Activated CD8-positive, alpha-beta T cell treated with anti-CD3 and anti-CD28 coated beads, Interleukin-2, amount 10 ng/mL, durations not matched to agents 7 days and 5 days (primary cell): ENCODE measurements at regions of chr3 and their contacts with region 1.

Region 1: DNA sequence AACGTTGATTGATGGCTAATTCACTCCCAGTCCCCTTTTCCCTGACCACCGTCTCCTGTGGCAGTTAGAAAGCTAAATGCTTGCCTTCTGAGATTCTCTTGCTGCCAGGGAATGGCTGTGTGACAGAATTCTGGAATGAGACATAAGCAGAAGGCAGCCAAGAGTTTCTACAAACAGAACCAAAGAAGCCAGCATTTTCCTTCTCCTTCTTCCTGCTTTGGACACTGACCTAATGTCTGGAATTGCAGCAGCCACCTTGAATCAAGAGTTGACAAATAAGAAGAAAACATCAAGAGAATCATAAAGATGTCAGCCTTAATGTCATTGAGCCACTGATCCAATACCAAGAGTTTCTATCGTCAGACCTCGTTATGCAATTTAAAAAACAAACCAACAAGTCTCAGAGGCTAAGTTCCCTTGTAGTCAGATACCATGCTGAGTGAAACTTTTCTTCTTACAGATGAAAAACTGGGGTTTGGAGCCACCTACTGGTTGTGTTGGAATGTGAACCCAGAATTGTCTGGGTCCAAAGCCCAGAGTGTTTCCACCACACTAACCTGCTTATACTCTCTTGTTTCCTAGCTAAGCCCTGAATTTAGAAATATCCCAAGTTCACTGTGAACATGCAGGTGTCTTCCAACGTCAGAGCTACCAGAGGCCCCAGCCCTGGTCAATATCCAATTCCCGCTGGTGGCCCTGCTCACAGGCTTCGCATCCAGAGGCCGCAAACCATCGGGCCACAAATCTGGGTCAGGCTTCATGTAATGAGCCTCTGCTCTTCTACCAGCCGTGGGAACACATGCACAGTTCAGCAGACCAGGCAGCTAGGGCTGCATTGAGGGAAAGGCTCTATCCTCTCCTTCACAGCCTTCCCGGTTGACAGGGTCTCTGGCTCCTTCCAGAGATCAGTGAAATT is 42.5 kb downstream of the MCF2L2 start:
- DNase-seq: peak; percentile 76
- ATAC-seq: peak; percentile 88
- H3K4me3 Mint-ChIP-seq: no peak overlapping the region
- H3K27ac Mint-ChIP-seq: no peak overlapping the region
- H3K4me1 Mint-ChIP-seq: peaks cover 4% of the 10 kb centered on the region
- H3K27me3 Mint-ChIP-seq: no peaks in the 10 kb centered on the region

Region 2: GRCh38 chr3:183116025-183116614 is 269.8 kb before region 1 on chr3:
- CTCF ChIA-PET with region 1: interaction called, 97 read pairs
- POLR2A ChIA-PET with region 1: no interaction called
- DNase-seq: peak; percentile 77
- ATAC-seq: peak; percentile 90
- H3K4me3 Mint-ChIP-seq: peak overlapping the region; percentile 74
- H3K27ac Mint-ChIP-seq: no peak overlapping the region
- H3K4me1 Mint-ChIP-seq: peaks cover 8% of the 10 kb centered on the region
- H3K27me3 Mint-ChIP-seq: peaks cover 12% of the 10 kb centered on the region

Region 3: DNA sequence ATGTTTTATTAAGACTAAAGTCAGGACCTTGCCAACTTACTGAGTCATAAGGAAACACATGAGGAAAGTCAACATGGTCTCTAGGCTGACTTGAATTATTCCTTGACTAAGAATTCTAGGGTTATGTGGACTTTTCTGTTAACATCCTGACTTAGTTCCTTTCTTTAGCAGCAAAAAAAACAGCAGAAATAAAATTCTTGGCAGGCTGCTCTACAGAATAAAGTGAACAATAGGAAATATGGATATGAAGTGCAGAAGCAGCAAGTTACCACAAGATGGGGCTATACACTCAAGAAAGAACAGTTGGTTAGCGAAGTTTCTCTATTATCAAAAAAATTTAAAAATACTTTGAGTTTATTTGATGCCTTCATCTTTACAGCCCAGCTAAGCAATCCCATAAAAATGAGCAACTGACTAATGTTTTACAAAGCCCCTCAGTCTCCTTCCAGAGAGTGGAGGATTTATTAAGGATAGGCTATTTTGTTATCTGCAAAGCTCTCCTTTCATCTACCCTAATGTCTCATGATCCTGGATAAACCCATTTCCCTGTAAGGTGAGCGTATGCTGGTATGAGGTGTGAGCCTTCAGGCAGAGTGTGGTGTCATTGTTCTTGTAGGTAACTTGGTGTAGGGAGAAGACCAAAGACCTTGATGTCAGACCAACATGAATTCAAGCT is 263.6 kb before region 1 on chr3:
- CTCF ChIA-PET with region 1: interaction called, 97 read pairs
- POLR2A ChIA-PET with region 1: no interaction called
- DNase-seq: no peak
- ATAC-seq: no peak
- H3K4me3 Mint-ChIP-seq: no peak overlapping the region
- H3K27ac Mint-ChIP-seq: no peak overlapping the region
- H3K4me1 Mint-ChIP-seq: peaks cover 5% of the 10 kb centered on the region
- H3K27me3 Mint-ChIP-seq: peaks cover 2% of the 10 kb centered on the region

Region 4: GRCh38 chr3:183161552-183162336 is 224.2 kb before region 1 on chr3:
- CTCF ChIA-PET with region 1: interaction called, 10 read pairs
- POLR2A ChIA-PET with region 1: no interaction called
- DNase-seq: peak; percentile 30
- ATAC-seq: peak; percentile 7
- H3K4me3 Mint-ChIP-seq: peak overlapping the region; percentile 92
- H3K27ac Mint-ChIP-seq: peak overlapping the region; percentile 89
- H3K4me1 Mint-ChIP-seq: peaks cover 40% of the 10 kb centered on the region
- H3K27me3 Mint-ChIP-seq: no peaks in the 10 kb centered on the region

Region 5: DNA sequence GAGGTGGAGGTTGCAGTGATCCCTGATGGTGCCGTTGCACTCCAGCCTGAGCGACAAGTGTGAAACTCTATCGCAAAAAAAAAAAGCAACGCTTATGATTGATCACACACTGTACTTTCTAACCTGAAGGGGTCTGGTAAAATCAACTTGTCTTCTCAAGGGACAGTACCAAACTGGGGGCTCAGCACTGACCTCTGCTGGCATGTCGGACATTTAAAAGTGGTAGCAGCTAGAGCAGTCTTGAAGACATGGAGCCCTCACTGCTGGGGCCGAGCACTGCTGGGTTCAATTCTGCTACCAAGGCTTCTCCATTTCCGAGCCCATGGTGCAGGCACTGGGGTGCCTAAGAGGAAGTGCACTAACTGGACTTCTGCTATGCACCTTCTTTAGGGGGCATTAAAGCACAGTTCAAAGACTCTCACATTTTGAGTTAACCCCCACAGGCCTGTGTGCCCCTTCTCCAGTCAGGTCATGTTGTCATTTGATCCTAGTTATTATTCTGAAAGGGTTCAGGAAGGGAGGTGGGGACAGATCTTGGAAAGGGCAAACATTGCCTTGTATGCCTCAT is 197.0 kb before region 1 on chr3:
- CTCF ChIA-PET with region 1: interaction called, 187 read pairs
- POLR2A ChIA-PET with region 1: no interaction called
- DNase-seq: peak; percentile 54
- ATAC-seq: peak; percentile 52
- H3K4me3 Mint-ChIP-seq: no peak overlapping the region
- H3K27ac Mint-ChIP-seq: no peak overlapping the region
- H3K4me1 Mint-ChIP-seq: peaks cover 17% of the 10 kb centered on the region
- H3K27me3 Mint-ChIP-seq: no peaks in the 10 kb centered on the region

Region 6: GRCh38 chr3:183252973-183253901 is 132.7 kb before region 1 on chr3 and contains the start of gene B3GNT5:
- CTCF ChIA-PET with region 1: interaction called, 39 read pairs
- POLR2A ChIA-PET with region 1: no interaction called
- DNase-seq: peak; percentile 37
- ATAC-seq: peak; percentile 65
- H3K4me3 Mint-ChIP-seq: peak within 1 kb of the TSS; percentile 72
- H3K27ac Mint-ChIP-seq: no peak within 1 kb of the TSS
- H3K4me1 Mint-ChIP-seq: peaks cover 9% of the 10 kb centered on the region
- H3K27me3 Mint-ChIP-seq: peaks cover 19% of the 10 kb centered on the region
- total RNA-seq, gene B3GNT5: 0.86 to 1.4 TPM

Region 7: GRCh38 chr3:183369117-183369516 is 16.8 kb before region 1 on chr3:
- CTCF ChIA-PET with region 1: interaction called, 12 read pairs
- POLR2A ChIA-PET with region 1: no interaction called
- DNase-seq: no peak
- ATAC-seq: no peak
- H3K4me3 Mint-ChIP-seq: no peak overlapping the region
- H3K27ac Mint-ChIP-seq: no peak overlapping the region
- H3K4me1 Mint-ChIP-seq: peaks cover 9% of the 10 kb centered on the region
- H3K27me3 Mint-ChIP-seq: no peaks in the 10 kb centered on the region